Endothelial cell of umbilical vein (primary cell): ENCODE measurements at regions of chr16 and their contacts with region 1.

Region 1: GRCh38 chr16:3880623-3881498 is at the start of gene CREBBP:
- DNase-seq: peak; percentile 87
- H3K4me3 ChIP-seq: peak within 1 kb of the TSS; percentile 12 to 94 (median 84)
- H3K27ac ChIP-seq: peak within 1 kb of the TSS; percentile 67
- H3K4me1 ChIP-seq: peaks cover 8% of the 10 kb centered on the region
- H3K27me3 ChIP-seq: no peaks in the 10 kb centered on the region
- CTCF ChIP-seq: no peak
- POLR2A ChIP-seq: peak; percentile 95
- total RNA-seq, gene CREBBP: 71.4 and 72.7 TPM in 2 replicates

Region 2: GRCh38 chr16:3774156-3774767 is 106.6 kb before region 1 on chr16:
- CTCF ChIA-PET with region 1: interaction called, 13 read pairs
- POLR2A ChIA-PET with region 1: no interaction called
- dilution Hi-C with region 1: no loop called
- intact Hi-C with region 1: no loop called
- DNase-seq: no peak
- H3K4me3 ChIP-seq: no peak overlapping the region
- H3K27ac ChIP-seq: no peak overlapping the region
- H3K4me1 ChIP-seq: no peaks in the 10 kb centered on the region
- H3K27me3 ChIP-seq: no peaks in the 10 kb centered on the region
- CTCF ChIP-seq: no peak
- POLR2A ChIP-seq: no peak

Region 3: GRCh38 chr16:3793161-3793576 is 87.7 kb before region 1 on chr16:
- CTCF ChIA-PET with region 1: interaction called, 3 read pairs
- POLR2A ChIA-PET with region 1: no interaction called
- dilution Hi-C with region 1: no loop called
- intact Hi-C with region 1: loop called (anchors 10 kb)
- DNase-seq: peak; percentile 81
- H3K4me3 ChIP-seq: no peak overlapping the region
- H3K27ac ChIP-seq: no peak overlapping the region
- H3K4me1 ChIP-seq: no peaks in the 10 kb centered on the region
- H3K27me3 ChIP-seq: no peaks in the 10 kb centered on the region
- CTCF ChIP-seq: peak in 1 of 2 donors; percentile 33
- POLR2A ChIP-seq: no peak

Region 4: DNA sequence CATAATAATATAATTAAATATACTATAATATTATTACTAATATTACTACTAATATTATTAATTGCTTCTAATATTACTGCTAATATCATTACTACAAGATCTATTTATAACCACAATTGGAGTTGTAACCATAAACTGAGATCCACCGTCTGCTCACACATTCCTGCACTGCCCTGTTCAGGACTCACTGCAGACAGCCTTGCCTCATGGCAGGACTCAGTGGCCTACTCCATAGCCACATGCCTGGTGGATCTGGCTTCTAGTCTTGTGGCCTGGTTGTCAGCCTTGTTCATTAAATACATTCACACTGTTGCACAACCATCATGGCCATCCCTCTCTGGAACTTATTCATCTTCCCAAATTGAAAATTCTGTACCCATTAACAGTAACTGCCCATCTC is 313.1 kb after region 1 on chr16:
- CTCF ChIA-PET with region 1: no interaction called
- POLR2A ChIA-PET with region 1: no interaction called
- dilution Hi-C with region 1: no loop called
- intact Hi-C with region 1: no loop called
- DNase-seq: no peak
- H3K4me3 ChIP-seq: no peak overlapping the region
- H3K27ac ChIP-seq: no peak overlapping the region
- H3K4me1 ChIP-seq: no peaks in the 10 kb centered on the region
- H3K27me3 ChIP-seq: no peaks in the 10 kb centered on the region
- CTCF ChIP-seq: no peak
- POLR2A ChIP-seq: no peak

Region 5: GRCh38 chr16:4416200-4417032 is 535.6 kb after region 1 on chr16 and contains the start of gene CORO7:
- CTCF ChIA-PET with region 1: no interaction called
- POLR2A ChIA-PET with region 1: no interaction called
- dilution Hi-C with region 1: no loop called
- intact Hi-C with region 1: no loop called
- DNase-seq: peak; percentile 93
- H3K4me3 ChIP-seq: peak within 1 kb of the TSS; percentile 55 to 94 (median 71)
- H3K27ac ChIP-seq: peak within 1 kb of the TSS; percentile 57
- H3K4me1 ChIP-seq: peaks cover 9% of the 10 kb centered on the region
- H3K27me3 ChIP-seq: no peaks in the 10 kb centered on the region
- CTCF ChIP-seq: no peak
- POLR2A ChIP-seq: no peak
- total RNA-seq, gene CORO7: 70.4 and 72.3 TPM in 2 replicates